ENCODE measurements at regions of chr10 and their contacts with region 1.

Region 1: GRCh38 chr10:24822590-24822989 is 98.9 kb upstream of the ARHGAP21 start:
- DNase-seq: no peak
- H3K4me3 Mint-ChIP-seq: no peak overlapping the region
- H3K27ac Mint-ChIP-seq: no peak overlapping the region
- H3K4me1 Mint-ChIP-seq: peaks cover 40% of the 10 kb centered on the region
- H3K27me3 Mint-ChIP-seq: peaks cover 2% of the 10 kb centered on the region

Region 2: DNA sequence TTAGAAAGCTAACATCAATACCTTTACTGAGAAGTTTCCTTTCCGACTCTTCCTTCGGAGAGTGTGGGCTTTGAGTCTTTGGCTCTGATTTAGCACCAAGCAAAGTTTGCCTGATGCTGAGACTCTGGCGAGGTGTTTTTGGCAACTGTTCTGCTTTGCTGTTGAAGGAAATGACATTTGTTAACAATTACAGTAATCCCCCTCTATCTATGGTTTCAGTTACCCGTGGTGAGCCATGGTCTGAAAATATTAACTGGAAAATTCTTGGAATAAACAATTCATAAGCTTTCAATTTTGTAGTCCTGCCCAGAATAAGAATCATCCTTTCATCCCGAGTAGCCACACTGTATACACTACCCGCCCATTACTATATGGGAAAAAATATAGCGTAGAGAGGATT is 225.2 kb before region 1 on chr10:
- intact Hi-C with region 1: loop called (anchors 1 kb)
- DNase-seq: no peak
- H3K4me3 Mint-ChIP-seq: no peak overlapping the region
- H3K27ac Mint-ChIP-seq: no peak overlapping the region
- H3K4me1 Mint-ChIP-seq: peaks cover 19% of the 10 kb centered on the region
- H3K27me3 Mint-ChIP-seq: no peaks in the 10 kb centered on the region

Region 3: DNA sequence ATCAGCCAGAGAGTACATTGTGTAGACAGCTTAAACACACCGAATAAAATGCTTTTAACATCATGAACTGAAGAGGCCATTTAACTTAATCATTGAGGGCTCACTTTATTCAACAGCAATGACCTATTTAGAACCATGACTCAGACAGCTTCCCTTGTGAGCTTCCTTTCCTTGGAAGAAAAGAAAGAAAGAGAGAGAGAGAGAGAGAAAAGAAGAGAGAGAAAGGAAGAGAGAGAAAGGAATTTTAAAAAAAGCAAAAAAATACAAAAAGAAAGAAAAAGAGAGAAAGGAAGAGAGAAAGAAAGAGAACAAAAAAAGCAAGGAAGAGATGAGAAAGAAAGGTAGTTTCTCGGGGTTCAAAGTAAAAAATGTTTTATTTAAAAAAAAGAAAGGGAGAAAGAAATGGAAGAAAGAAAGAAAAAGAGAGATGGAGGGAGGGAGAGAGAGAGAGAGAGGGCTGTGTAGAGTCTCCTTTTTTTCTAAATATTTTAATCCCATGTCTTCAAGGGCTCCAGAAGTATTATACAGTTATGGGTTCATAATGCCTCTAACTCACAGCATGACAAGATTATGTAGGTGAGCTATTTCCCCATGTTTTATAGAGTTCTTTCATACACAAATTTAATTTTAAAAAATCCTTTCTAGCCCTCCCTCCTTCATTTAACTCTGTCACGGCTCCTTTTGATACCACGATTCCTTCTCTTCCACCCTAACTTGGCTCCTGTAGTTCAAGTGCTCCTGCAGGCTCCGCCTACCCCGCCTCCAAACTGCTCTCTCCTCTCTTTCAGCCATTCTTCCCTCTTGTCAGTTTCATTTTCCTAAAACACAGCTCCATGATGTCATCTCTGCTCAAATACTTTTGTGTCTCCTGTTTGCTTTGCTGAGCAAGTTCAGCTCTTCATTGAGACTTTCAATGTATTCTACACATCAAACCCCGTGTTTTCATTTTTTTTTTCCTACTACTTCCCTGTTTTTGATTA is 44.3 kb after region 1 on chr10:
- intact Hi-C with region 1: loop called (anchors 1 kb)
- DNase-seq: no peak
- H3K4me3 Mint-ChIP-seq: peak overlapping the region; percentile 2
- H3K27ac Mint-ChIP-seq: peak overlapping the region; percentile 7
- H3K4me1 Mint-ChIP-seq: peaks cover 42% of the 10 kb centered on the region
- H3K27me3 Mint-ChIP-seq: no peaks in the 10 kb centered on the region

Region 4: GRCh38 chr10:24901686-24902399 is 79.3 kb after region 1 on chr10:
- intact Hi-C with region 1: loop called (anchors 1 kb)
- DNase-seq: no peak
- H3K4me3 Mint-ChIP-seq: no peak overlapping the region
- H3K27ac Mint-ChIP-seq: peak overlapping the region; percentile 73
- H3K4me1 Mint-ChIP-seq: peaks cover 33% of the 10 kb centered on the region
- H3K27me3 Mint-ChIP-seq: no peaks in the 10 kb centered on the region

Region 5: GRCh38 chr10:24947304-24948097 is 124.9 kb after region 1 on chr10:
- intact Hi-C with region 1: loop called (anchors 2 kb)
- DNase-seq: no peak
- H3K4me3 Mint-ChIP-seq: no peak overlapping the region
- H3K27ac Mint-ChIP-seq: no peak overlapping the region
- H3K4me1 Mint-ChIP-seq: peaks cover 13% of the 10 kb centered on the region
- H3K27me3 Mint-ChIP-seq: peaks cover 2% of the 10 kb centered on the region